Activated B cell treated with CpG ODN at 0.5 μM for 24 hours (primary cell): ENCODE measurements at regions of chr6 and their contacts with region 1.

Region 1: DNA sequence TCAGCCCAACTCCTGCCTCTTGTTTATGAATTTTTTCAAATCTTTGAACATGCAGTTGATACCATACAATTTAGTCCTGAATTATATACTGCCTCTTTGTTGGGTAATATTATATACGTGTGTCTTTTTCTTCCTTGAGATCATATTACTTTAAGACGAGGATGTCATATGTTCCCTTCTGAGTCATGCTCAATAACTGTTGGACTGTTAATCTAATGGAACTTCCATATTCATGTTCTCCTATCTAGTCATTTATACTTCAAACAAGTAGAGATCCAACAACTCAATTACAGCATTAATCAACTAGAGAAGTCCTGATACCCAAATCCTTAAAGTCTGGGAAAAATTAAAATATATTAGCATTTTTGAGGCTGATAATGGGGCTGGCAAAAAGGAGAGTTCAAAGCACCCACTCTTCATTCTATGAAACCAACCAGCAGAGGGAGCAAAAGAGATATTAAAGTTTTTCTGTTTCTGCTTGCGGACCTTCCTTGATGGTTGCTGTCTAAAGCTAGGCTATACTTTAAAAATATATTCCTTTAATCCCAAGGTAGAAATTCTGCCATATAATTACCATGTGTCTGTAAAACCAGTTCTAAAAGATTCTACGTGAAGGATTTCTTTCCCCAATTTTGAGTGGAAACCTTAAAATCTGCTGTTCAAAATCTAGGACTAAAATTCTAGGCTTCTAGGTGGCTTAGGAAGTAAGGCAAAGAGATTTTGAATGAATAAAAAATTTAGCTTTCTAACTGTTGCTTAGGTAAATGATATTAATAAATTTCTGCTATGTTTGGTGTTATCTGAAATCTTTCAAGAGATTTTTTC is 498.9 kb downstream of the BCKDHB start:
- DNase-seq: no peak
- ATAC-seq: no peak
- H3K4me3 Mint-ChIP-seq: no peak overlapping the region
- H3K27ac Mint-ChIP-seq: no peak overlapping the region
- H3K4me1 Mint-ChIP-seq: no peaks in the 10 kb centered on the region
- H3K27me3 Mint-ChIP-seq: no peaks in the 10 kb centered on the region
- CTCF ChIP-seq: no peak

Region 2: GRCh38 chr6:80214436-80215022 is 390.8 kb before region 1 on chr6:
- CTCF ChIA-PET with region 1: no interaction called
- POLR2A ChIA-PET with region 1: no interaction called
- intact Hi-C with region 1: loop called (anchors 10 kb)
- DNase-seq: no peak
- ATAC-seq: no peak
- H3K4me3 Mint-ChIP-seq: no peak overlapping the region
- H3K27ac Mint-ChIP-seq: no peak overlapping the region
- H3K4me1 Mint-ChIP-seq: no peaks in the 10 kb centered on the region
- H3K27me3 Mint-ChIP-seq: no peaks in the 10 kb centered on the region
- CTCF ChIP-seq: no peak

Region 3: GRCh38 chr6:82006027-82006738 is 1400.8 kb after region 1 on chr6:
- CTCF ChIA-PET with region 1: interaction called, 3 read pairs
- POLR2A ChIA-PET with region 1: no interaction called
- intact Hi-C with region 1: loop called (anchors 2 kb)
- DNase-seq: no peak
- ATAC-seq: no peak
- H3K4me3 Mint-ChIP-seq: no peak overlapping the region
- H3K27ac Mint-ChIP-seq: no peak overlapping the region
- H3K4me1 Mint-ChIP-seq: no peaks in the 10 kb centered on the region
- H3K27me3 Mint-ChIP-seq: no peaks in the 10 kb centered on the region
- CTCF ChIP-seq: no peak

Region 4: GRCh38 chr6:82178077-82178758 is 1572.8 kb after region 1 on chr6:
- CTCF ChIA-PET with region 1: no interaction called
- POLR2A ChIA-PET with region 1: no interaction called
- intact Hi-C with region 1: loop called (anchors 5 kb)
- DNase-seq: no peak
- ATAC-seq: no peak
- H3K4me3 Mint-ChIP-seq: no peak overlapping the region
- H3K27ac Mint-ChIP-seq: no peak overlapping the region
- H3K4me1 Mint-ChIP-seq: no peaks in the 10 kb centered on the region
- H3K27me3 Mint-ChIP-seq: no peaks in the 10 kb centered on the region
- CTCF ChIP-seq: no peak